CD4-positive, alpha-beta memory T cell (primary cell): ENCODE measurements at regions of chr19 and their contacts with region 1.

Region 1: DNA sequence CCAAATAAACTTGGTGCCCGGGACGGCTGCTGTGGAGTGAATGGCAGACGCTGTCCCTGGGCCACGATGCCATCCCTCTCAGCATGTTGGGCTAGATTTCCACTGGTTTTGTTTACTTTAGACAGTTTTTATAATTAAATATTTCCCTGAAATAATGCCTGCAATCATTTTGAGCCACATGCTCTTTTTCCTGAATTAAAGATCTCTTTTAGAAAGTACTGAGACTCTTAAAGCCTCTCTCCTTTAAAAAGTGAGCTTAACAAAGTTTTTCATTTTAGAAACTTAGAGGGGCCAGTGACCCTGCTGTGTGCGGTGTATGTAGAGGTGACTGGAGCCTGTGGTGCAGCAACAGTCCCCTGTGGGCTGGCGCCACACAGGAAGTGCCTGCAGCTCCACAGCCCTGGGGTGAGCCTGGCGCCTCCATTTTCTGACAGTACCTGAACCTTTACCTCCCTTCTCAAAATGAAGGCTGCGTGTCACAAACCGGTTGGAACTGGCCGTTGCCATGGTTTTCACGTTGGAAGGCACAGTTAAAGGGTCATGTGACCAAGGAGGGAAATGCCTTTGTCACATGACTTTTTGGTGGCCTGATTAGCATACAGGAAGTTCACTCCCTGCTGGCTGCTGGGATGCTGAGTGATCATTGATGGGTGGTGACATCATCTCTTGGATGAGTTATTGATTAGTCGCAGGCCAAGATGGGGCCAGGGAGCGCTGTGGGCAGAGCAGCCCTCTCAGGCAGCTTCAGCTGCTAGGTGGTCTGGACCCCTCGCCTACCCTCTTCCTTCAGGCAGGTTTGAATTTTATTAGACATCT is 26.3 kb downstream of the TSSK6 start:
- DNase-seq: peak; percentile 93 to 99 (median 95)
- H3K4me3 ChIP-seq: peak overlapping the region; percentile 9 to 37
- H3K4me3 Mint-ChIP-seq: peak overlapping the region; percentile 68 to 87 (median 78)
- H3K27ac ChIP-seq: peak overlapping the region; percentile 80
- H3K27ac Mint-ChIP-seq: peak overlapping the region; percentile 98 to 100 (median 100)
- H3K4me1 ChIP-seq: peaks cover 54% of the 10 kb centered on the region
- H3K4me1 Mint-ChIP-seq: peaks cover 29 to 67% (median 47%) of the 10 kb centered on the region in 4 donors
- H3K27me3 ChIP-seq: no peaks in the 10 kb centered on the region
- H3K27me3 Mint-ChIP-seq: no peaks in the 10 kb centered on the region

Region 2: GRCh38 chr19:19185853-19186740 is 303.0 kb before region 1 on chr19:
- CTCF ChIA-PET with region 1: interaction called, 5 read pairs
- POLR2A ChIA-PET with region 1: interaction called, 11 read pairs
- intact Hi-C with region 1: loop called (anchors 1 kb)
- DNase-seq: peak; percentile 64 to 69 (median 66)
- H3K4me3 ChIP-seq: no peak overlapping the region
- H3K4me3 Mint-ChIP-seq: peak overlapping the region in 2 of 8 donors; percentile 29 to 52
- H3K27ac ChIP-seq: no peak overlapping the region
- H3K27ac Mint-ChIP-seq: peak overlapping the region in 5 of 7 donors; percentile 55 to 81 (median 65)
- H3K4me1 ChIP-seq: peaks cover 21% of the 10 kb centered on the region
- H3K4me1 Mint-ChIP-seq: peaks cover 11 to 33% (median 24%) of the 10 kb centered on the region in 4 donors
- H3K27me3 ChIP-seq: no peaks in the 10 kb centered on the region
- H3K27me3 Mint-ChIP-seq: no peaks in the 10 kb centered on the region

Region 3: GRCh38 chr19:19320362-19321142 is 168.5 kb before region 1 on chr19 and contains the starts of genes MAU2 and SUGP1:
- CTCF ChIA-PET with region 1: interaction called, 5 read pairs
- POLR2A ChIA-PET with region 1: interaction called, 9 read pairs
- intact Hi-C with region 1: loop called (anchors 1 kb)
- DNase-seq: peak; percentile 92 to 94 (median 94)
- H3K4me3 ChIP-seq: peak within 1 kb of the TSS; percentile 96 to 98
- H3K4me3 Mint-ChIP-seq: peak within 1 kb of the TSS; percentile 93 to 100 (median 99)
- H3K27ac ChIP-seq: peak within 1 kb of the TSS; percentile 97
- H3K27ac Mint-ChIP-seq: peak within 1 kb of the TSS; percentile 94 to 100 (median 100)
- H3K4me1 ChIP-seq: peaks cover 49% of the 10 kb centered on the region
- H3K4me1 Mint-ChIP-seq: peaks cover 22 to 64% (median 40%) of the 10 kb centered on the region in 4 donors
- H3K27me3 ChIP-seq: no peaks in the 10 kb centered on the region
- H3K27me3 Mint-ChIP-seq: no peaks in the 10 kb centered on the region
- total RNA-seq, gene MAU2: 148 to 155 TPM
- total RNA-seq, gene SUGP1: 84.7 to 97.5 TPM

Region 4: DNA sequence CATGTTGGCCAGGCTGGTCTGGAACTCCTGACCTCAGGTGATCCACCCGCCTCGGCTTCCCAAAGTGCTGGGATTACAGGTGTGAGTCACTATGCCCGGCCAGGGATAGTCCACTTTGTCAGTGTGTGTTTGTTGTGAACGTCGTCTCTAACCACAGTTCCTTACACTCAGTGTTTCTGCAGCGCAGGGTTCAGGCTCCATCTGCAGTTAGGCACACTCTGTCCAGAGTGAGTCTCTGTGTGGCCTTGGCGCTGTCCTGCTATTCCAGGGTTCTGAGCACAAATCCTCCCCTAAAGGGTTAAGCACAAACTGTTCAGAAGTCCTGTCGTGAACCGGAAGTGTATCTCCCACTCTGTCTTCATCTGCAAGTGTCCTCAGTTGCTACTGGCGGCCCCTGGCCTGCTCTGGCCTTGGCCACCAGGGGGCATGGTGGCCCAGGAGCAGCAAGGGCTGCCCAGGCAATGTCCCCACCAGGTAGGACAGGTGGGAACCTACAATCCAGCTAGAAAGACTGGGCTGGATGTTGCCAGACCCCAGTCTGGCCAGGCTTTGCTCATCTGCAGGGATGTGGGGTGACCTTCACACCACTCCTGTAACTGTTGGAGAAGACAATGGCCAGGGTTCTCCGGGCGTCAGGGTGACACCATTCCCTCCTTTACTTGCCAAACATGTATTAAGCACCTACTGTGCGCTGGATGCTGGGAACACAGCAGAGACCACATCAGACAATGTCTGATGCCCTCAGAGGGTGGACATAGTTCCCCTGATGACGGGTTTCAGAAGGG is 122.3 kb before region 1 on chr19:
- CTCF ChIA-PET with region 1: interaction called, 287 read pairs
- POLR2A ChIA-PET with region 1: interaction called, 134 read pairs
- intact Hi-C with region 1: loop called (anchors 1 kb)
- DNase-seq: peak; percentile 63 to 73 (median 70)
- H3K4me3 ChIP-seq: peak overlapping the region in 1 of 2 donors; percentile 11
- H3K4me3 Mint-ChIP-seq: peak overlapping the region in 6 of 8 donors; percentile 31 to 82 (median 64)
- H3K27ac ChIP-seq: no peak overlapping the region
- H3K27ac Mint-ChIP-seq: peak overlapping the region; percentile 74 to 93 (median 89)
- H3K4me1 ChIP-seq: peaks cover 24% of the 10 kb centered on the region
- H3K4me1 Mint-ChIP-seq: peaks cover 12 to 25% (median 18%) of the 10 kb centered on the region in 4 donors
- H3K27me3 ChIP-seq: no peaks in the 10 kb centered on the region
- H3K27me3 Mint-ChIP-seq: no peaks in the 10 kb centered on the region

Region 5: GRCh38 chr19:19385108-19385899 is 103.8 kb before region 1 on chr19:
- CTCF ChIA-PET with region 1: interaction called, 9 read pairs
- POLR2A ChIA-PET with region 1: interaction called, 31 read pairs
- intact Hi-C with region 1: loop called (anchors 1 kb)
- DNase-seq: peak; percentile 99 to 100 (median 99)
- H3K4me3 ChIP-seq: peak overlapping the region; percentile 52 to 57
- H3K4me3 Mint-ChIP-seq: peak overlapping the region; percentile 87 to 97 (median 94)
- H3K27ac ChIP-seq: peak overlapping the region; percentile 85
- H3K27ac Mint-ChIP-seq: peak overlapping the region; percentile 90 to 97 (median 94)
- H3K4me1 ChIP-seq: peaks cover 48% of the 10 kb centered on the region
- H3K4me1 Mint-ChIP-seq: peaks cover 25 to 47% (median 35%) of the 10 kb centered on the region in 4 donors
- H3K27me3 ChIP-seq: no peaks in the 10 kb centered on the region
- H3K27me3 Mint-ChIP-seq: no peaks in the 10 kb centered on the region

Region 6: GRCh38 chr19:19444681-19445155 is 44.4 kb before region 1 on chr19:
- CTCF ChIA-PET with region 1: interaction called, 9 read pairs
- POLR2A ChIA-PET with region 1: interaction called, 11 read pairs
- intact Hi-C with region 1: loop called (anchors 5 kb)
- DNase-seq: peak in 1 of 5 donors; percentile 63
- H3K4me3 ChIP-seq: no peak overlapping the region
- H3K4me3 Mint-ChIP-seq: peak overlapping the region in 7 of 8 donors; percentile 14 to 84 (median 50)
- H3K27ac ChIP-seq: peak overlapping the region; percentile 44
- H3K27ac Mint-ChIP-seq: peak overlapping the region; percentile 79 to 96 (median 91)
- H3K4me1 ChIP-seq: peaks cover 61% of the 10 kb centered on the region
- H3K4me1 Mint-ChIP-seq: peaks cover 49 to 80% (median 65%) of the 10 kb centered on the region in 4 donors
- H3K27me3 ChIP-seq: no peaks in the 10 kb centered on the region
- H3K27me3 Mint-ChIP-seq: no peaks in the 10 kb centered on the region

Region 7: DNA sequence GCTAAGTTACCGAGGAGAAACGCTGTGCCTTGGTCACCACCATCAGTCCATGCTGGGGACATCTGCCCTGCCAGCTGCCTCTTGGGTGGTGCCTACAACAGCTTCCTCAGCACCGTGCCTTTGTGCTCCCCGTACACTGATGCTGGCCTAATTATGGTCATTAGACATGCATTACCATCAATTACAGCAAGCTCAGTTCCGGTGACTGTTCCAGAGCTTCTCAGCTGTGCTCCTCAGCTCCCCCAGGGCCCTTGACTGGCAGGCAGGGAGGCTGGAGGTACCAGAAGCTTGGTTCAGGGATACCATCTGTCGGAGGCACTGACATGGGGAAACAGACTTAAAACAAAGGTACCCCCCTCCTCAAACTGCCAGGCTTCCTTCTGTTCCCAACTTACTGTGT is 89.2 kb after region 1 on chr19:
- CTCF ChIA-PET with region 1: no interaction called
- POLR2A ChIA-PET with region 1: no interaction called
- intact Hi-C with region 1: no loop called
- DNase-seq: no peak
- H3K4me3 ChIP-seq: no peak overlapping the region
- H3K4me3 Mint-ChIP-seq: no peak overlapping the region
- H3K27ac ChIP-seq: no peak overlapping the region
- H3K27ac Mint-ChIP-seq: peak overlapping the region in 1 of 7 donors; percentile 25
- H3K4me1 ChIP-seq: peaks cover 7% of the 10 kb centered on the region
- H3K4me1 Mint-ChIP-seq: peaks cover 9 to 22% (median 17%) of the 10 kb centered on the region in 4 donors
- H3K27me3 ChIP-seq: no peaks in the 10 kb centered on the region
- H3K27me3 Mint-ChIP-seq: no peaks in the 10 kb centered on the region